PC-3 (cell line): ENCODE measurements at regions of chr3 and their contacts with region 1.

Region 1: GRCh38 chr3:157081681-157082210 is 78.2 kb downstream of the CCNL1 start:
- DNase-seq: peak; percentile 98
- ATAC-seq: peak; percentile 94
- H3K4me3 ChIP-seq: peak overlapping the region; percentile 38; the same call in 1 of the 2 replicates
- H3K27ac ChIP-seq: peak overlapping the region; percentile 97
- H3K4me1 ChIP-seq: peaks cover 36% of the 10 kb centered on the region
- H3K27me3 ChIP-seq: no peaks in the 10 kb centered on the region
- CTCF ChIP-seq: peak; percentile 99

Region 2: GRCh38 chr3:156151824-156152428 is 929.8 kb before region 1 on chr3:
- CTCF ChIA-PET with region 1: no interaction called
- POLR2A ChIA-PET with region 1: no interaction called
- intact Hi-C with region 1: loop called (anchors 5 kb)
- DNase-seq: peak; percentile 80
- ATAC-seq: peak; percentile 80
- H3K4me3 ChIP-seq: no peak overlapping the region
- H3K27ac ChIP-seq: no peak overlapping the region
- H3K4me1 ChIP-seq: no peaks in the 10 kb centered on the region
- H3K27me3 ChIP-seq: no peaks in the 10 kb centered on the region
- CTCF ChIP-seq: peak; percentile 88

Region 3: DNA sequence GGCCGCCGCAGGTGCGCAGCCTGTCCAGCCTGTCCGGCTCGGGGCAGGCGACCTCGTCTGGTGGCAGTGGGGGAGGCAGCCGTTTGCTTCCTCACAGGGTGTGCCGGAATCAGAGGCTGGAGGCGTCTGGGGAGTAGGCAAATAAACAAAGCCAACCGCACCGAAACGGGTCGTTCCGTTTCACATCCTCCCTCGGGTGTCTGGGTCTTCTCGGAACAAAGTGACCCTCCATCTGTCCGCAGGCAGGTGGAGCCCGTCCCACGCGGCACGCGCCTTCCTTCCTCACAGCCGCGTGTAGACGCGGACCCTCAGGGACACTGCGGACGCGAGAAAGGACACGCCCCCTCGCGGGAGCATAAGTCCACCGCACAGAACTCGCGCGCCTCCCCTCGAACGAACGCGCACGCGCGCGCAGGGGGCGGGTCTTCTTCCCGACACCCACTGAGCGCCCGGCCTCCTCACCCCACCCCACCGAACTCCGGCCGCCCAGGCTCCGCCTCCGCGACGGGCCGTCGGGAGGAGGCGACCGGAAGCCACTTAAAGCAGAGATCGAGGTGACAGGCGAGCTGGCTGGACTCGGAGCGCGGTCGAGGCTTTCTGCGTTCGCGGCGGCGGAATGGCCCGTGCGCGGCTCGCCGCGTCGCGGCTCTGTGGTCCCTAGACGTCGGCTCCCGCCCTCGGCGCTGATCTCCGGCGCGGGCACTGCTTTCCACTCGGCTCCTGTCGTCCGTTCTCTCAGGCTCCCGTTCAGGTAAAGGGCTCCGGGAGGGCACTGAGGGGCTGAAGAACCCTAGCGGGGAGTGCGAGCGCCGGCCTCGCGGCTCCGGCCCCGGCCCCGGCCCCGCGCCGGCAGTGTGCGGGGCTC is 407.5 kb before region 1 on chr3 and contains the start of gene TIPARP:
- CTCF ChIA-PET with region 1: interaction called, 6 read pairs
- POLR2A ChIA-PET with region 1: no interaction called
- intact Hi-C with region 1: loop called (anchors 1 kb)
- DNase-seq: peak; percentile 99
- ATAC-seq: peak; percentile 79
- H3K4me3 ChIP-seq: peak within 1 kb of the TSS; percentile 96
- H3K27ac ChIP-seq: peak within 1 kb of the TSS; percentile 78
- H3K4me1 ChIP-seq: peaks cover 37% of the 10 kb centered on the region
- H3K27me3 ChIP-seq: no peaks in the 10 kb centered on the region
- CTCF ChIP-seq: peak; percentile 84
- total RNA-seq, gene TIPARP: 84.7 and 85.5 TPM in 2 replicates

Region 4: DNA sequence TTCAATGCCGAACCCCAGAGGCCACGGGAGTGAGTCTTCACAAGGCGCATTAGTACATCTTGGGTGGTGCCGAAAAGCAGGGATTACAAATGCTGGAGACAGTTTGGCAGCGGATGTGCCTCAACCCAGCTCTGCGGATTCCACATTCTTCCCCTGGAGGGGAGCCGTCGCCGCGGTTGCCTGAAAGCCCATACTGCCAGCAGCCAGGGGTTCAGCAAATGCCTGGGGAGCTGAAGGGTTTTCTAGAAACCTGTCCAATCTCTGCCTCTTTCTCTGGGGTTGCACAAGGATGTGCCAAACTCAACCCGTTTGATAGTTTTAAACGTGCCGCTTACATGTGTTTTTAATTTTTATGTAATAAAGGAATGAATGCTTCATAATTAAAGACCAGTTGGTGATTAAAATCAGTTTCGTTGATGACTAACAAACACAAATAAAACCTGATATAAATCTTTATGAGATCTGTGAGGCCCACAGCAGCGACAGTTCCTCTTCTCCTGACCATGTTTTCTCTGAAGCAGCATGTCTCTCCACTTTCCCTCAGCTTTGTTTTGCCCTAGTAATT is 330.2 kb before region 1 on chr3:
- CTCF ChIA-PET with region 1: no interaction called
- POLR2A ChIA-PET with region 1: no interaction called
- intact Hi-C with region 1: no loop called
- DNase-seq: no peak
- ATAC-seq: peak; percentile 36
- H3K4me3 ChIP-seq: no peak overlapping the region
- H3K27ac ChIP-seq: no peak overlapping the region
- H3K4me1 ChIP-seq: no peaks in the 10 kb centered on the region; the same call in 1 of the 2 replicates
- H3K27me3 ChIP-seq: no peaks in the 10 kb centered on the region
- CTCF ChIP-seq: no peak

Region 5: DNA sequence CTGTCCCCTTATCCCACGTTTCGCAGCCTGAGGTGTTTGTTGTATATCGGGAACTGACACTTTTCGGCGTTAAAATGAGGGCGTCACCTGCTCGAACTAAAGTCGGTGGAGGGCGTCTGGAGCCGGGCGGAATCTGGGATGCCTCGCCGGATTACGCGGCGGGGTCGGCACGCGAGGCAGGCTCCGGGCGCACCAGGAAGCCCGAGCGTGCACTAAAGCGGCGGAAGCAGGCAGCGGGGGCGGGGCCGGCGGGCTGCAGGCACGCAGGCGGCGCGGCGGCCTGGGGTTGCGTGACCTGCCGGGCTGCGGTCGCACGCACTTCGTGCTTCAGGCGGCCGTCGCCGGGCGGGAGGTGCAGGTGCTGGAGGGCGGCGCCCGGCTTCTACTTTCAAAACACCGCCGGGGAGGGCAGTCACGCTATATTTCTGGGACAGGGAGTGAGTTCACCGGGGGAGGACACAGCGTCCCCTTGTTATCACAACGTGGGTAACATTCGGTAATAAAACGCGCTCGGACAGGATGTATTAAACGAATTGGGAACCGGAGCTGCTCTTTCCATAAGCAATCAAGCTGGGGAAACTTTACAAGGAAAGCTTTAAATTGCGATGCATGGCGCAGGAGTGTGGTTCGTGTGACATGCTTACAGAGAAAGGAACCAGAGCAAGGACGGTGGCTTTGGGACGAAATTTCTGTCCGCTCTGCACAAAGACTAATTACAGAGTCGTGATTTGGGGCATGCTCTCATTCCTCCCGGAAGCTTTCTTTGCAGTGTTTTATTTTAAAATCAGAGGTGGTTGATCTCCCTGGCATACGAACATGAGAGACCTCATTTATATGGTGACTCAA is 264.7 kb before region 1 on chr3:
- CTCF ChIA-PET with region 1: interaction called, 3 read pairs
- POLR2A ChIA-PET with region 1: interaction called, 4 read pairs
- intact Hi-C with region 1: loop called (anchors 1 kb)
- DNase-seq: peak; percentile 95
- ATAC-seq: peak; percentile 68
- H3K4me3 ChIP-seq: peak overlapping the region; percentile 64
- H3K27ac ChIP-seq: peak overlapping the region; percentile 98
- H3K4me1 ChIP-seq: peaks cover 65% of the 10 kb centered on the region
- H3K27me3 ChIP-seq: no peaks in the 10 kb centered on the region
- CTCF ChIP-seq: 0 out of 2 replicates have a peak, but pooled peaks have one; percentile 18

Region 6: DNA sequence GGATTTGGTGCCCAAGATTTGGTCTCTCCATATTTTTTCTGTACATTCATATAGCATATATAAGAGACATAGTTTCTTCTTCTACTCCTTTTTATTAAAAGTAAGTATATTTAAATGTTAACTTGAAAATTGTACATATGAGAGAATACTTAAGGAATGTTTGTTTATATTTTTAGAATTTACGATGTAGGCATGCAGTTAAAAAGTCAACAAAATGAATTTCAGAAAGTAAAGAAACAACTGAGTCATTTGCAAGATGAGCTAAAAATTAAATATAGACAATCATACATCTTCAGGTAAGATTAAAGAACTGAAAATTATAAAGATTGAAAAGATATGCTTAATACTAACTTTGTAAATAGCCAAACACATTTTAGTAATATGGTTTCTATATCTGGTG is 161.3 kb before region 1 on chr3:
- CTCF ChIA-PET with region 1: no interaction called
- POLR2A ChIA-PET with region 1: no interaction called
- intact Hi-C with region 1: loop called (anchors 1 kb)
- DNase-seq: peak; percentile 58
- ATAC-seq: peak; percentile 60
- H3K4me3 ChIP-seq: no peak overlapping the region; the same call in 1 of the 2 replicates
- H3K27ac ChIP-seq: peak overlapping the region; percentile 72
- H3K4me1 ChIP-seq: peaks cover 37% of the 10 kb centered on the region
- H3K27me3 ChIP-seq: no peaks in the 10 kb centered on the region
- CTCF ChIP-seq: no peak

Region 7: GRCh38 chr3:157136647-157137387 is 55.1 kb after region 1 on chr3:
- CTCF ChIA-PET with region 1: interaction called, 14 read pairs
- POLR2A ChIA-PET with region 1: interaction called, 5 read pairs
- intact Hi-C with region 1: loop called (anchors 1 kb)
- DNase-seq: peak; percentile 63
- ATAC-seq: peak; percentile 27
- H3K4me3 ChIP-seq: no peak overlapping the region
- H3K27ac ChIP-seq: peak overlapping the region; percentile 99
- H3K4me1 ChIP-seq: peaks cover 56% of the 10 kb centered on the region
- H3K27me3 ChIP-seq: no peaks in the 10 kb centered on the region
- CTCF ChIP-seq: no peak